ENCODE measurements at regions of chr6 and their contacts with region 1.

Region 1: DNA sequence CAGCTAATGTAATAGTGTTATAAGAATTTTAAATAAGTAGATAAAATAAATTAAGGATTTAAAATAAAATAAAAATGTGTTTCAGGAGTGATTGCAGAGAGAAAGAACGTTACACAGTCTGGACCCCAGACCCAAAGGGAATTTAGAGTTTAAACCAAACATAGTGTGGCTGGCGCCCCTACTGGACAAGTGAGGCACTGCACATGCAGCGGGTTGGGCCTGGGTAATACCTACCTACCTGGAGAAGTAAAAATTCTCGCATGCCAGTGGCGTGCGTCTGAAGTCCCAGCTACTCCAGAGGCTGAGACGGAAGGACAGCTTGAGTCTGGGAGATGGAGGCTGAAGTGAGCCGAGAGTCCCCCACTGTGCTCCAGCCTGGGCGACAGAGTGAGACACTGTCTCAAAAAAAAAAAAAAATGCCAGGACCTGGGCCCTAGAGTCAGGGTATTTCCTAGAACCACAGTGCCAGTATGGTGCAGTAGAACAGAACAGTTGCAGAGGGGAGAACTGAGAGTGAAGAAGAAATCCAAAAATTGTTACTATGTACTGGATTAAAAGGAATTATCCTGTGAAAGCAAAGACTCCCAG is 71.4 kb upstream of the TCF21 start:
- DNase-seq: peak; percentile 56
- H3K4me3 ChIP-seq: no peak overlapping the region
- H3K27ac ChIP-seq: no peak overlapping the region
- H3K4me1 ChIP-seq: no peaks in the 10 kb centered on the region
- H3K27me3 ChIP-seq: no peaks in the 10 kb centered on the region; the same call in 1 of the 2 replicates
- CTCF ChIP-seq: peak; percentile 76
- EP300 ChIP-seq: no peak
- RAD21 ChIP-seq: peak; percentile 42

Region 2: DNA sequence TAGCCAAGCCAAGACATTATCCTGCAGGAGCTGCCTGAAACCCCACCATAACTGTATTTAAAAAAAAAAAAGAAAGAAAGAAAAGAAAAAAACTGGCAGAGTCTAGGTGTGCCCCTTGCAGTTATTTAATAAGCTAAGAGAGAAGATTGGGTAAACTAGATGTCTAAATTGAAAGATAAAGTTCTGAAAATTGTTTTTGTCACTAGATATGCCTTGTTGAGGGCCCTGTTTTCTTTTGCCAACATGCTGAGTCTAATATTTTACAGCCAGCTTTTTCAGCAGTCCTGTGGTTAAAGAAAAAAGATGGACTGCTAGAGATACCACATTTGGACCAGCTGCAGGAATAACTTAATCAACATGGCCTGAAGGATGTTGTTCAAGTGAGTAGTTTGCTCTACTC is 45.0 kb before region 1 on chr6:
- CTCF ChIA-PET with region 1: no interaction called
- POLR2A ChIA-PET with region 1: no interaction called
- DNase-seq: no peak
- H3K4me3 ChIP-seq: no peak overlapping the region
- H3K27ac ChIP-seq: no peak overlapping the region
- H3K4me1 ChIP-seq: no peaks in the 10 kb centered on the region
- H3K27me3 ChIP-seq: no peaks in the 10 kb centered on the region
- CTCF ChIP-seq: no peak
- EP300 ChIP-seq: no peak
- RAD21 ChIP-seq: no peak

Region 3: DNA sequence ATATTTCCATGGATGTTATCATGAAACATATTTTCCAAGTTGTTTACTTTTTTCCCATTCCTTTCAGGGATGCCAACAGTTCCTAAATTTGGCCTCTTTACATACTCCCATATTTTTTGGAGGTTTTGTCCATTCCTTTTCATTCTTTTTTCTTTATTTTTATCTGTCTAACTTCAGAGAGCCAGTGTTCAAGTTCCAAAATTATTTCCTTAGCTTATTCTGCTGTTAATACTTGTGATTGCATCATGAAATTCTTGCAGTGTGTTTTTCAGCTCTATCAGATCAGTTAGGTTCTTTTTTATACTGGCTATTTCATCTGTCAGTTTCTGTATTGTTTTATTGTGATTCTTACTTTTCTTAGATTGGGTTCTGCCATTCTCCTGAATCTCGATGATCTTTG is 18.5 kb before region 1 on chr6:
- CTCF ChIA-PET with region 1: interaction called, 12 read pairs
- POLR2A ChIA-PET with region 1: no interaction called
- DNase-seq: no peak
- H3K4me3 ChIP-seq: no peak overlapping the region
- H3K27ac ChIP-seq: no peak overlapping the region
- H3K4me1 ChIP-seq: no peaks in the 10 kb centered on the region
- H3K27me3 ChIP-seq: no peaks in the 10 kb centered on the region
- CTCF ChIP-seq: no peak
- EP300 ChIP-seq: no peak
- RAD21 ChIP-seq: no peak

Region 4: GRCh38 chr6:133804263-133804662 is 13.3 kb before region 1 on chr6:
- CTCF ChIA-PET with region 1: interaction called, 12 read pairs
- POLR2A ChIA-PET with region 1: no interaction called
- DNase-seq: no peak
- H3K4me3 ChIP-seq: no peak overlapping the region
- H3K27ac ChIP-seq: no peak overlapping the region
- H3K4me1 ChIP-seq: no peaks in the 10 kb centered on the region
- H3K27me3 ChIP-seq: no peaks in the 10 kb centered on the region
- CTCF ChIP-seq: no peak
- EP300 ChIP-seq: no peak
- RAD21 ChIP-seq: no peak

Region 5: DNA sequence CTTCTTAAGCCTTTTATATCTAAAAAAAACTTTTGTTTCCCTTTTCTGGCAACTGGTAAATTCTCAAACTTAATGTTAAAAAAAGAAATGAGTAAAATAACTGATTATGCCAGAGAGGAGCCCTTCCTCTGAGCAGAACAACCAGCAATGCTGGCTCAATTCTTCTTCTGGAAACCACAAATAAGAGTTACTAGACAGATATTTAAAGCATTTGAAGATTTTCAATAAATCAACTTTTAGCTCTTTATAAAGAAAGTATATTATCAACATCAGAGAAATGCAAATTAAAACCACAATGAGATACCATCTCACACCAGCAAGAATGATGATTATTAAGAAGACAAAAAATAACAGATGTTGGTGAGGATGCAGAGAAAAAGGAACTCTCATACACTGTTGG is 10.2 kb after region 1 on chr6:
- CTCF ChIA-PET with region 1: interaction called, 23 read pairs
- POLR2A ChIA-PET with region 1: no interaction called
- DNase-seq: no peak
- H3K4me3 ChIP-seq: no peak overlapping the region
- H3K27ac ChIP-seq: no peak overlapping the region
- H3K4me1 ChIP-seq: no peaks in the 10 kb centered on the region
- H3K27me3 ChIP-seq: 0 out of 2 replicates have a peak, but pooled peaks cover 6% of the 10 kb centered on the region
- CTCF ChIP-seq: no peak
- EP300 ChIP-seq: no peak
- RAD21 ChIP-seq: no peak

Region 6: GRCh38 chr6:133837801-133838349 is 20.3 kb after region 1 on chr6:
- CTCF ChIA-PET with region 1: interaction called, 11 read pairs
- POLR2A ChIA-PET with region 1: no interaction called
- DNase-seq: peak; percentile 49
- H3K4me3 ChIP-seq: peak overlapping the region; percentile 42 to 61
- H3K27ac ChIP-seq: no peak overlapping the region
- H3K4me1 ChIP-seq: no peaks in the 10 kb centered on the region; a peak in 1 of 4 replicates
- H3K27me3 ChIP-seq: peaks cover 27% of the 10 kb centered on the region
- CTCF ChIP-seq: peak; percentile 66
- EP300 ChIP-seq: no peak
- RAD21 ChIP-seq: peak; percentile 44